ENCODE measurements at regions of chr15 and their contacts with region 1.

Region 1: GRCh38 chr15:49415638-49416037 is 7.4 kb upstream of the FGF7 start:
- DNase-seq: no peak
- CTCF ChIP-seq: no peak

Region 2: DNA sequence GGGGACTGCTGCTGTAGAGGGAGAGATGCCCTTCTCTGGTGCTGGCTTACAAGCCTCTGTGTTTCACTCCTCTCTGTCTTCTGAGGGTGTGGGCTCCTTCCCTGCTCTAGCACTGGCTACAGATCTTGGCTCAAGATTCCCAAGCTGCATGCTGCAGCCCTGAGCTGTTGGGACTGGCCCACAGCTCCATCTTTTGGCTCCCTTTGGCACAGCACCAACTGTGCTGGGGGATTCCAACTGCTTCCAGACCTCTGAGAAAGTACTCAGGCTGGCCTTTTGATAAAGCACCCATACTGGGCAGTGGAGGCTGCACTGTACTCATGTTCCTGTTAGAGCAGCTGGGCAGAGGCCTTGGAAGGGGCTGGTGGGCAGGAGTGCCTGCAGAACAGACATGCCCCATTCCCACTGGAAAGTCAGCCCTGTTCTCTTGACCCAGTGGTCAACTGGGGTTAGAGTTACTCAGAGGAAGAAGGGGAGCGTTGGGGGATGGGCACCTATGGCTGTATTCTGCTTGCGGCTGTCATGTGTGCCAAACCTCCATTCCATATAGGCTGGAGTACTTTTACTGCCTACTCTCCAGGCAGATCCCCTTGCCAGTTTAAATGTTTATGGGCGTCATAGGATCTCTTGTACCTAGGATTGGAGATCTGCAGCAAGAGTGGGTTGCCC is 189.9 kb before region 1 on chr15:
- in situ Hi-C with region 1: loop called (anchors 10 kb)
- DNase-seq: no peak
- CTCF ChIP-seq: no peak

Region 3: DNA sequence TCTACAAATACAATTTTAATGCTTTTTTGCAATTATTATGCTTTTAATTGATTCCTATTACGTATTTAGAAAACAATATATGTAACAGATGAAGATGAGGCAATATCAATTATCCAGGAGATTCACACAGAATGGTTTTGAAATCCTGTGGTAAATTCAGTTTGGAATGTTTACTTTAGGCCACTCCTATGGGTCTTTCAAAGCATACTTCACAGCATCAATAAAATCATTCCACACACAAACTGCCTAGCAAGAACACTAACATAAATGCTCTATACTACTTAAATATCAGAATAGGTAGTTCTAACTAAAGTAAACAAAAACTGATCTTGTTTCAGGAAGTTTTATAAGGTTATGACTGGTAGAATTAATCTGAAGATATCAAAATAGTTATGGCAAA is 114.5 kb after region 1 on chr15:
- in situ Hi-C with region 1: no loop called
- DNase-seq: no peak
- CTCF ChIP-seq: no peak

Region 4: GRCh38 chr15:49927189-49927868 is 511.7 kb after region 1 on chr15:
- in situ Hi-C with region 1: no loop called
- DNase-seq: no peak
- CTCF ChIP-seq: no peak